ENCODE measurements at regions of chr3 and their contacts with region 1.

Region 1: DNA sequence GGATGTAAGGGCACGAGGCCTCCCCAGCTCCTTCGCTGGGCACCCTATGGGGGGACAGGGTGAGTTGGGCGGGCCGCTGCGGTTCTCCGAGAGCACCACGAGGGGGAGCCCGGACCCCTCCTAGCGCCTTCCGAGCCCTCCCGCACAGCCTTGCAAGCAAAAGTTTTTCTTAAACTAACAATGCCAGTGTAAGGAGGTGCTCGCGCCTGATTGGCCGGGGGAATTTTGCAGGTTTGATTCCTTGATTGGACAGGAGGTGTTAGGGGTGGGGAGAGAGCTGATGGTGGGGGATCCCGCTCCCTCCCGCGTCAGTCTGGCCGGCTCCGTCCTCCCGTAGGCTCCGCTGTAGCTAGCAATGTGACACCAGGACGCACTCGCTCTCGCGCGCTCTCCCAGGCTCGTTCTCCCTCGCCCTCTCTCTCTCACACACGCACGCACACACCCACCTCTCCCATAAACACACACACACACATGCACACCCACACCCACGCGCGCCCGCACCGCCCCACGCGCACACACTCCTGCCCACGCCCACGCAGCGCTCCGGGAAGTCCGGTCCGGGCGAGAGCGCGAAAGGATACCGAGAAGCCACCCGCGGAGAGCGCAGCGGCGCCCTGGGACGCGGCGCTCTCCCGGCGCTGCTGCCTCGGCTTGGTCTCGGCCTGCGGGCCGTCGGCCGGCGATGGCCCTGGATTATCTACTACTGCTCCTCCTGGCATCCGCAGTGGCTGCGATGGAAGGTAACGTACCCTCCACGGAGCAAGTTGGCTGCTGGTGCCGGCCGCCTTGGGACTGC is at the start of gene EPHB1:
- DNase-seq: peak; percentile 94
- ATAC-seq: peak; percentile 83
- H3K4me3 ChIP-seq: peak within 1 kb of the TSS; percentile 74
- H3K27ac ChIP-seq: peak within 1 kb of the TSS; percentile 54
- H3K4me1 ChIP-seq: 0 out of 2 replicates have a peak, but pooled peaks cover 3% of the 10 kb centered on the region
- H3K27me3 ChIP-seq: no peaks in the 10 kb centered on the region; a peak in 1 of 4 replicates
- CTCF ChIP-seq: peak; percentile 89 to 94 (median 90)
- EP300 ChIP-seq: peak in 1 of 2 experiments; percentile 14; a peak in 1 of 4 replicates
- POLR2A ChIP-seq: peak; percentile 75
- RAD21 ChIP-seq: peak; percentile 91
- polyA plus RNA-seq, gene EPHB1: 0.34 to 0.49 TPM

Region 2: DNA sequence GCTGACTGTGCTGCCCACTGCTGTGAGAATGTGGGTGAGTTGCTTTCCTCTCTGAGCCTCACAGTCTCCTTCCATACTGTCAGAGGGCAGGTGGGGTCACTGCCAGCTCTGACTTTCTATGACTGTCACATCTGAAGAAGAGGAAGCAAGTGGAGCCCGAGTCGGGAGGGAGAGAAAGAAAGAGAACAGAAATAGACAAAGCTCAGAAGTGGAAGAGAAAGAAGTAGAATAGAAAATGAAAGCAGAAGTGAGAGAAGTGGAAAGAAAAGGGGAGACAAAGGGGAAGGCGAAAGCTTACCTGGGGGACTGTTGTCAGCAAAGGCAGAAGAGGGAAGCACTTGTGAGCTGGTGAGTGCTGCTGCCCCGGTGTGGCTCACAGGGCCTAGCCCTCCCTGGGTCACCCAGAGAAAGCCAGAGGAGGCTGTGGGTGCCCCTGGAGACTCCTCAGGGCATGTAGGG is 57.8 kb after region 1 on chr3:
- CTCF ChIA-PET with region 1: interaction called, 21 read pairs
- POLR2A ChIA-PET with region 1: interaction called, 9 read pairs
- RAD21 ChIA-PET with region 1: interaction called, 146 read pairs
- SMC1A ChIA-PET with region 1: interaction called, 25 read pairs
- in situ Hi-C with region 1: no loop called
- intact Hi-C with region 1: loop called (anchors 2 kb)
- DNase-seq: peak; percentile 91
- ATAC-seq: peak; percentile 96
- H3K4me3 ChIP-seq: no peak overlapping the region
- H3K27ac ChIP-seq: peak overlapping the region; percentile 68
- H3K4me1 ChIP-seq: peaks cover 36% of the 10 kb centered on the region
- H3K27me3 ChIP-seq: no peaks in the 10 kb centered on the region
- CTCF ChIP-seq: peak in 2 of 3 experiments; percentile 25 to 32; a peak in 2 of 6 replicates
- EP300 ChIP-seq: peak; percentile 56 to 69; a peak in 2 of 4 replicates
- POLR2A ChIP-seq: peak; percentile 56; the same call in 1 of the 2 replicates
- RAD21 ChIP-seq: peak; percentile 39

Region 3: GRCh38 chr3:134904241-134904771 is 109.2 kb after region 1 on chr3:
- CTCF ChIA-PET with region 1: interaction called, 39 read pairs
- POLR2A ChIA-PET with region 1: interaction called, 11 read pairs
- RAD21 ChIA-PET with region 1: interaction called, 111 read pairs
- SMC1A ChIA-PET with region 1: interaction called, 110 read pairs
- in situ Hi-C with region 1: no loop called
- intact Hi-C with region 1: loop called (anchors 1 kb)
- DNase-seq: peak; percentile 97
- ATAC-seq: peak; percentile 94
- H3K4me3 ChIP-seq: peak overlapping the region; percentile 27; the same call in 1 of the 2 replicates
- H3K27ac ChIP-seq: peak overlapping the region; percentile 79
- H3K4me1 ChIP-seq: peaks cover 39% of the 10 kb centered on the region
- H3K27me3 ChIP-seq: no peaks in the 10 kb centered on the region
- CTCF ChIP-seq: no peak
- EP300 ChIP-seq: peak; percentile 98 to 99
- POLR2A ChIP-seq: no peak
- RAD21 ChIP-seq: 0 out of 2 replicates have a peak, but pooled peaks have one; percentile 16

Region 4: GRCh38 chr3:134978658-134979057 is 183.5 kb after region 1 on chr3:
- CTCF ChIA-PET with region 1: interaction called, 39 read pairs
- POLR2A ChIA-PET with region 1: interaction called, 6 read pairs
- RAD21 ChIA-PET with region 1: interaction called, 23 read pairs
- SMC1A ChIA-PET with region 1: interaction called, 7 read pairs
- in situ Hi-C with region 1: no loop called
- intact Hi-C with region 1: loop called (anchors 5 kb)
- DNase-seq: no peak
- ATAC-seq: peak; percentile 74
- H3K4me3 ChIP-seq: no peak overlapping the region
- H3K27ac ChIP-seq: no peak overlapping the region
- H3K4me1 ChIP-seq: no peaks in the 10 kb centered on the region
- H3K27me3 ChIP-seq: no peaks in the 10 kb centered on the region
- CTCF ChIP-seq: peak in 2 of 3 experiments; percentile 26 to 33; a peak in 2 of 6 replicates
- EP300 ChIP-seq: no peak
- POLR2A ChIP-seq: no peak
- RAD21 ChIP-seq: peak; percentile 26; the same call in 1 of the 2 replicates

Region 5: GRCh38 chr3:135136361-135137100 is 341.4 kb after region 1 on chr3:
- CTCF ChIA-PET with region 1: interaction called, 13 read pairs
- POLR2A ChIA-PET with region 1: no interaction called
- RAD21 ChIA-PET with region 1: interaction called, 4 read pairs
- SMC1A ChIA-PET with region 1: interaction called, 5 read pairs
- in situ Hi-C with region 1: no loop called
- intact Hi-C with region 1: no loop called
- DNase-seq: peak; percentile 12
- ATAC-seq: peak; percentile 74
- H3K4me3 ChIP-seq: no peak overlapping the region
- H3K27ac ChIP-seq: no peak overlapping the region
- H3K4me1 ChIP-seq: no peaks in the 10 kb centered on the region; the same call in 1 of the 2 replicates
- H3K27me3 ChIP-seq: no peaks in the 10 kb centered on the region
- CTCF ChIP-seq: no peak
- EP300 ChIP-seq: no peak
- POLR2A ChIP-seq: no peak
- RAD21 ChIP-seq: no peak

Region 6: GRCh38 chr3:135246027-135246426 is 450.9 kb after region 1 on chr3:
- CTCF ChIA-PET with region 1: interaction called, 84 read pairs
- POLR2A ChIA-PET with region 1: no interaction called
- RAD21 ChIA-PET with region 1: interaction called, 90 read pairs
- SMC1A ChIA-PET with region 1: interaction called, 40 read pairs
- in situ Hi-C with region 1: loop called (anchors 10 kb)
- intact Hi-C with region 1: loop called (anchors 2 kb)
- DNase-seq: no peak
- ATAC-seq: peak; percentile 45; the same call in 2 of the 3 replicates
- H3K4me3 ChIP-seq: no peak overlapping the region
- H3K27ac ChIP-seq: no peak overlapping the region
- H3K4me1 ChIP-seq: no peaks in the 10 kb centered on the region
- H3K27me3 ChIP-seq: no peaks in the 10 kb centered on the region
- CTCF ChIP-seq: peak; percentile 12 to 52 (median 40); a peak in 4 of 6 replicates
- EP300 ChIP-seq: no peak
- POLR2A ChIP-seq: no peak
- RAD21 ChIP-seq: peak; percentile 15; the same call in 1 of the 2 replicates

Region 7: DNA sequence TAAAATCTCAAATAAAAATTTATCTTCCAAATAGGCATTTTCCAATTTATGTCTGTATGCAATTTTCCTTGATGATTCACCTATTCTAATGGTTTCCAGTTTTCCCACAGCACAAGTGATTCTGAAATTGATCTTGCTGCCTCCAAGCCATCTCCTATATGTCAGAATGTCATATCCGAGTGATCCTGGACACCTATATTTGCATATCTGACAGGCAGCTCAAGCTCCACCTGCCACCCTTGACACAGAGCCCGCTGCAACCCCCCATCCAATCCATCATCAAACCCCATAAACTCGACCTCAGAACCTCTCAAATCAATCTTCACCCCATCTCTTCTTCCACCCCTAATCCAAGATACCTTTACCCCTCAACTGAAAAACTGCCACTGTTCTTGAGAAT is 579.4 kb after region 1 on chr3:
- CTCF ChIA-PET with region 1: no interaction called
- POLR2A ChIA-PET with region 1: no interaction called
- RAD21 ChIA-PET with region 1: no interaction called
- SMC1A ChIA-PET with region 1: no interaction called
- in situ Hi-C with region 1: no loop called
- intact Hi-C with region 1: no loop called
- DNase-seq: no peak
- ATAC-seq: no peak
- H3K4me3 ChIP-seq: no peak overlapping the region
- H3K27ac ChIP-seq: no peak overlapping the region
- H3K4me1 ChIP-seq: no peaks in the 10 kb centered on the region
- H3K27me3 ChIP-seq: no peaks in the 10 kb centered on the region; a peak in 2 of 4 replicates
- CTCF ChIP-seq: no peak
- EP300 ChIP-seq: no peak
- POLR2A ChIP-seq: no peak
- RAD21 ChIP-seq: no peak

Measured in GM12878 (cell line).